ENCODE measurements at regions of chr1 and their contacts with region 1.

Region 1: GRCh38 chr1:21368515-21369289 is 71.2 kb upstream of the NBPF3 start:
- H3K4me3 ChIP-seq: no peak overlapping the region
- H3K27ac ChIP-seq: no peak overlapping the region
- H3K4me1 ChIP-seq: no peaks in the 10 kb centered on the region
- CTCF ChIP-seq: peak; percentile 99

Region 2: DNA sequence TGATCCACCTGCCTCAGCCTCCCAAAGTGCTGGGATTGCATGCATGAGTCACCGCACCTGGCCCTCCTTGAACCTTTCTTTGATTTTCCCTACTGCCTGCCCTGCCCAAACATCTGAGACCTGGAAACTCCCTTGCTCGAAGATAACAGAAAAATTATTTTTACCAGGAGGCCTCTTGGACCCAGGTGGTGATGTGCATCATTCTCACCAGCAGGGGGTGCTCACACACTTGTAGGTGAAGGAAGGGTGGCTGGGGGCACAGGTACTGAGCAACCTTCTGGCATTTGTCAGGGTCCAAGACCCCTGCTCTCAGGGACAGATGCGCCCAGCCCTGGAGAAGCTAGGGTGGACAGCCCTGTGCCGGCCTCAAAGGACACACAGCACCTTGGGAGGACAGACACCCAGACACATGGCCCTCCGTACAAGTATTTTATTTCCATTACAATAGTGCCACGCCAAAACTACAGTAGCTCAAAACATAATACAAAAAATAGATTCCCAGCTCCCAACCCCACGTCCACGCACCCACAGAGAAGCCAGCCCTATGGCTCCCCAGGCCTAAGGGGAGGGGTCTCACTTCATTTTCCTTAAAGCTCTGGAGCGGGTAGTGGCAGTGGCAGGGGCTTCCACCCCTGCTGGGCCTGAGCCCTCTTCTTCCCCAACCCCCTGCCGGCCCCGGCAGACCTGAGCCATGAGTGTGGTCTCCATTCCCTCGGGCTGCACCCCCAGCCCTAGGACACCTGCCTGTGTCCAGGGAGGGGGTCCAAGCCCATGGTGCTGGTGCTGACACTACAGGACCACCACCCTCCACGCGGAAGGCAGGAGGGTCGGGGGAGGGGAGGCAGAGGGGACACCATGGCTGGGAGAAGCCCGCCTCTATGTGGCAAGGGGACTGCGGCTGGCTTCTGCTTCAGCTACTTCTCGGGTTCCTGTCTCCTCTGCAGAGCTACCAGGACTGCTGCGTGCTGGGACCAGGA is 151.6 kb before region 1 on chr1:
- CTCF ChIA-PET with region 1: interaction called, 56 read pairs
- POLR2A ChIA-PET with region 1: no interaction called
- H3K4me3 ChIP-seq: no peak overlapping the region
- H3K27ac ChIP-seq: no peak overlapping the region
- H3K4me1 ChIP-seq: no peaks in the 10 kb centered on the region
- CTCF ChIP-seq: peak; percentile 36; the same call in 1 of the 2 replicates

Region 3: GRCh38 chr1:21238141-21238800 is 130.4 kb before region 1 on chr1:
- CTCF ChIA-PET with region 1: interaction called, 173 read pairs
- POLR2A ChIA-PET with region 1: interaction called, 5 read pairs
- H3K4me3 ChIP-seq: no peak overlapping the region
- H3K27ac ChIP-seq: no peak overlapping the region
- H3K4me1 ChIP-seq: no peaks in the 10 kb centered on the region
- CTCF ChIP-seq: no peak

Region 4: DNA sequence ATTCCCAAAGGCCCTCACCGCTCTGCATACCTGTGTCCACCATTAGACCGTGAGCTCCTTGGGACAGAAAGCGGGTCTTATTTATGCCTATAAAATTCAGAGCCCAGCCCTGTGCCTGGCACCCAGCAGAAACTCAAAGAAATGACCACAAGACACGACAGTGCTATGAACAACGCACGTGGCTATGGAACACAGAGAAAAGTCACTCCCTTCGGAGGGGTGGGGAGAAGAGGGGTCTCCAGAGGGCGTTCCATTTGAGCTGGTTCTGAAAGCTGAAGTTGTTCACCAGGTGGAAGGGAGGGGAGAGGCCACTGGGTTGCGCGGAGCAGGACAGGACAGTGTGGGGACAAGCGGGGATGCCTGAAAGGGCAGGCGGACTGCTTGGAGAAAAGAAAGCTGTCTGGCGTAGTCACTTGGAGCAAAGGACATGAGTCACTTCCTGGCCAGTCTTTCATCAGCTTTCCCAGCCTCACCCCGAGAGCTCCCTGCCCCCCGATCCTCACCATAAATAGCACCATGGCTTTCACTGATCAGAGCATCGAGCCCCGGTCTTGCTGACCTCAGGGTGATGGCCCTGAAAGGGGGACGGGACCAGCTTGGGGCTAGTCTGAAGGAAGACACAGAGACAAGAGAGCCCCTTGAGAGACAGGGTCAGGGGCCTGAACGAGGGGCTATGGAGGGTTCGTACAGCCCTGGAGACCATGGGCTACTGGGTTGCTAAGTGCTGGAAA is 107.0 kb before region 1 on chr1:
- CTCF ChIA-PET with region 1: interaction called, 256 read pairs
- POLR2A ChIA-PET with region 1: no interaction called
- H3K4me3 ChIP-seq: no peak overlapping the region
- H3K27ac ChIP-seq: no peak overlapping the region
- H3K4me1 ChIP-seq: no peaks in the 10 kb centered on the region; the same call in 1 of the 2 replicates
- CTCF ChIP-seq: no peak

Region 5: DNA sequence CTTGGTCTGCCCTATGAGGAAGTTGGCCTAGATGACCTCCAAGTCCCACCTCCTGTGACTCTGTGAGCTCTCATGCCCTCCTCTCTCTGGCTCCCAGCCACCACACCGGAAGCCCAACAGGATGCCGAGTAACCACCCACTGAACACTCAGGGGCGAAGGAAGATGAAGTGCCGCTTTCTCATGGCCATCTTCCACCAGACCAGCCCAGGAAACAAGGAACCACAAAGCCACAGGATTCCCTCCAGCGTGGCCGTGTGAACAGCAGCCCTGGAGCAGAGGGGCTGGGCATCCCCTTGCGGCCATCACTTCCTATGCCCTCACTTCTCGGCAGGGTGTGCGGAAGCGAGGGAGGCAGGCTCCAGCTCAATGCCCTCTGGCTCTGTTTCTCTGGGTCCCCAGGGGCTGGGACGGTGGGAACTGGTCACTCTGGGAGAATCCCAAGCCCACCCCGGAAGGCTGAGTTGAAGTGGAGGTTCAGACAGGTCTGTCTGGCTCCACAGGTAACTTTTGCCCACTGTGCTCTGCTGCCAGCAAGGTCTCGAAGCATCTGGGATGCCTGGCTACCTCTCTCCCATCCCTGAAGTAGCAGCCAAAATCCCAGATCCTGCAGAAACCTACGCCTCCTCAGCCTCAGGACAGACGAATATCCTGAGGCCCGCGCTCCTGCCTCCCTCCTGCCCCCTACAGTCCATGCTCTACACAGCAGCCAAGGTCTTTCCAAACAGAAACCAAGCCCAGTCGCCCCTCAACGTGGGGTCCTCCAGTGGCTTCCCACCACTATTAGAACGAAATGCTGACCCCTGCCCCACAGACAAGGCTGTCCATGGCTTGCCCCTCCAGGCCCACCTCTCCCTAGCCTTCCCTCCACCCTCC is 34.3 kb before region 1 on chr1:
- CTCF ChIA-PET with region 1: interaction called, 16 read pairs
- POLR2A ChIA-PET with region 1: no interaction called
- H3K4me3 ChIP-seq: no peak overlapping the region
- H3K27ac ChIP-seq: peak overlapping the region; percentile 48; the same call in 1 of the 2 replicates
- H3K4me1 ChIP-seq: peaks cover 38% of the 10 kb centered on the region
- CTCF ChIP-seq: peak; percentile 92

Region 6: DNA sequence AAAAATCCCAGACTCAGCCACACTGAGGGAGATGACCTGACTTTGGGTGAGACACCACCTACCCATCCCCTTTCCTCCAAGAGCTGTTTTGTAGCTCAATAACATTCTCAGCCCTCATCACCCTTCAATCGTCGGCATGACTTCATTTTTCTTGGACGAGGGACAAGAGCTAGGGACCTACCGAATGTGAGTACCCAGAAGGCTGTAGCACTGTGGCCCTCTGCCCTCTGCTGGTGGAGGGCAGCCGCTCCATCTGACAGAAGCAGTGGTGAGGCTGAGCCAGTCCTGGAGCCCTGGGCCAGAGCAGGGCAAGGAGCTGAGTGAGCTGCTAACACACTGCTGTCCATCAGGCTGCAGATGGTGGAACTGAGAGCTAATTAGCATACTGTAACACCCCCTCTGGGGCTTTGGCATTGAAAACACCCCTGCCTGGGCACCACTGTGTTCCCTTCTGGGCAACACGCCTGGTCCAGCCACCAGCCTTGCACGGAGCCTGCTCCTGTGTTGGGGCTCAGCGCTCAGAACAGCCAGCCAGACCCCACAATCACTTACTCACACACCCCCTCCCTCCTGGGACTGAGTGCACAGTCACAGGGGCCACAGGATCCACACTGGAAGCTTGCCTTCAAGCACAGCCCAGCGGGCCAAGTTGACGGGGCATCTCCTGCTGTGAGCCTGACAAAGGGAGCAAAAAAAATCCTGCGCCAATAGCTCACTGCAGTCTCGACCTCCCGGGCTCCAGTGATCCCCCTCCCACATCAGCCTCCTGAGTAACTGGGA is 122.3 kb after region 1 on chr1:
- CTCF ChIA-PET with region 1: interaction called, 29 read pairs
- POLR2A ChIA-PET with region 1: no interaction called
- H3K4me3 ChIP-seq: no peak overlapping the region
- H3K27ac ChIP-seq: no peak overlapping the region
- H3K4me1 ChIP-seq: peaks cover 8% of the 10 kb centered on the region; the same call in 1 of the 2 replicates
- CTCF ChIP-seq: no peak

Region 7: DNA sequence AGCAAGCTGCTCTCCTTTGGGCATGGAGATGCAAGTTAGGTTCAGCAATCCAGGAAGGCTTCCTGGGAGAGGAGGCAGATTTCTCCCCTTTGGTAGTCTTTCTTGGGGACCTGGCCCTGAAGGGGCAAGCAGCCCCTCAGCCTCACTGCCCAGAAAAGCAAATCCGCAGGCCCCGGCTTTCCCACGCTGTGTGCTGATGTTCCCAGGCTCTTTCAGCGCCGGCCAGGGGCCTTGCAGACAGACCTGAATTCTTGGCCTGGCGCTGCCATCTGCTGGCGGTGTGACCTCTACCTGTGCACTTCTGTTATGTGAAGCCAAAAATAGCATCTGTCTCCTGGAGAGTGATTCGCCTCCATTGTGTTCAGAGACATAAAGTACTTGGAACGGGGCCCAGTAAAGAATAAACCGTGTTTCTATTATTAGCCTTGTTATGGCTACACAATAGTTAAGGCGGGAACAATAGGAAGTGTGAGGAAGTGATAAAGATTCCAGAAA is 205.3 kb after region 1 on chr1:
- CTCF ChIA-PET with region 1: interaction called, 36 read pairs
- POLR2A ChIA-PET with region 1: interaction called, 3 read pairs
- H3K4me3 ChIP-seq: no peak overlapping the region
- H3K27ac ChIP-seq: no peak overlapping the region; the same call in 1 of the 2 replicates
- H3K4me1 ChIP-seq: no peaks in the 10 kb centered on the region; the same call in 1 of the 2 replicates
- CTCF ChIP-seq: peak; percentile 60

Measured in HEK293 (cell line).